Naive thymus-derived CD4-positive, alpha-beta T cell (primary cell): ENCODE measurements at regions of chr11 and their contacts with region 1.

Region 1: GRCh38 chr11:1852877-1853276 is at the start of gene LSP1:
- DNase-seq: peak in 8 of 9 donors; percentile 78 to 89 (median 84)
- ATAC-seq: peak; percentile 69
- H3K4me3 ChIP-seq: peak within 1 kb of the TSS; percentile 94
- H3K4me3 Mint-ChIP-seq: peak within 1 kb of the TSS; percentile 91 to 100 (median 97)
- H3K27ac ChIP-seq: peak within 1 kb of the TSS; percentile 80
- H3K27ac Mint-ChIP-seq: peak within 1 kb of the TSS; percentile 94 to 99 (median 97)
- H3K4me1 ChIP-seq: peaks cover 58 to 66% of the 10 kb centered on the region in 2 donors
- H3K4me1 Mint-ChIP-seq: peaks cover 31 to 72% (median 48%) of the 10 kb centered on the region in 7 donors
- H3K27me3 ChIP-seq: no peaks in the 10 kb centered on the region
- H3K27me3 Mint-ChIP-seq: peaks cover 0 to 4% (median 0%) of the 10 kb centered on the region in 5 donors
- total RNA-seq, gene LSP1: 248 to 578 (median 289) TPM

Region 2: DNA sequence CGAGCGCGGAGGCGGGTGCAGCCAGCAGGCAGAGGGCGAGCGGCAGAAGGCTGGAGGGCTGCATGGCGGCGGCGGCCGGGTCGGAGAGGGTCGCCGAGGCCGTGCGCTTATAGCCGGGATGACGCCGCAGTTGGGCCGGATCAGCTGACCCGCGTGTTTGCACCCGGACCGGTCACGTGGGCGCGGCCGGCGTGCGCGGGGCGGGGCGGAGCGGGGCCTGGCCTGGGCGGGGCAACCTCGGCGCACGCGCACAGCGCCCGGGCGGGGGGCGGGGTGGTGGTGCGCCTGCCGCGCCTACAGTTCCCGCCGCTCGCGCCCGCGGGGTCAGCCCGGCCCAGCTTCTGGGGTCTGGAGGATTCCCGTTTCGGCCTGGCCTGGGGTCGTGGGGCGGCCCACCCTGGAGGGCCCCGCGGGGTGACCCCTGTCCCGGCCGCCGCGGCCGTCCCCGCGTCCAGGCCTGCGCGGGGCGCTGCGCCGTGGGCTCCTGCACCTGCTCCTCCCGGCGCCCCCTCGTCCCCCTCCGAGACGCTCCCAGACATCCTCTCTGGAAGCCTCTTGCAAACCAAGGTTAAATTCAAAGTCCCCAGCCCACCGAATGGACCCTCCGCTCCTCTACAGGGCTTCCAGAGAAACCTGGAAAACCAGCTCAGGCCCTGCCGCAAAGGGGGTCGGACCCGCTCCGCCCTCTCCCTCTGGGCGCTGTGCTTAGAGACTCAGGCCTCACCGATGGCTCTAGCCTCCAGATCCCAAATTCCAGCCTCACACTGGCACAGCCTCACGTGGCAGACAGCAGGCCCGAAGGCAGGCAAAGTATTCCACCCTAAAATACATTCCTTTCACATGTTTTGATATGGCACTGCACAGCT is 88.8 kb before region 1 on chr11 and contains the start of gene CTSD:
- CTCF ChIA-PET with region 1: no interaction called
- POLR2A ChIA-PET with region 1: no interaction called
- intact Hi-C with region 1: loop called (anchors 5 kb)
- DNase-seq: peak; percentile 76 to 99 (median 83)
- ATAC-seq: peak; percentile 87
- H3K4me3 ChIP-seq: peak within 1 kb of the TSS; percentile 70
- H3K4me3 Mint-ChIP-seq: peak within 1 kb of the TSS; percentile 86 to 96 (median 91)
- H3K27ac ChIP-seq: peak within 1 kb of the TSS; percentile 82
- H3K27ac Mint-ChIP-seq: peak within 1 kb of the TSS; percentile 84 to 92 (median 87)
- H3K4me1 ChIP-seq: peaks cover 33 to 39% of the 10 kb centered on the region in 2 donors
- H3K4me1 Mint-ChIP-seq: peaks cover 14 to 41% (median 33%) of the 10 kb centered on the region in 7 donors
- H3K27me3 ChIP-seq: no peaks in the 10 kb centered on the region
- H3K27me3 Mint-ChIP-seq: no peaks in the 10 kb centered on the region
- total RNA-seq, gene CTSD: 103 to 378 (median 186) TPM

Region 3: GRCh38 chr11:1870721-1871466 is 18.0 kb after region 1 on chr11:
- CTCF ChIA-PET with region 1: interaction called, 5 read pairs
- POLR2A ChIA-PET with region 1: interaction called, 91 read pairs
- intact Hi-C with region 1: loop called in 1 of 2 experiments (anchors 1 kb)
- DNase-seq: peak in 7 of 9 donors; percentile 37 to 60 (median 50)
- ATAC-seq: peak; percentile 77
- H3K4me3 ChIP-seq: peak overlapping the region; percentile 51
- H3K4me3 Mint-ChIP-seq: peak overlapping the region; percentile 62 to 89 (median 82)
- H3K27ac ChIP-seq: peak overlapping the region; percentile 49
- H3K27ac Mint-ChIP-seq: peak overlapping the region; percentile 56 to 96 (median 93)
- H3K4me1 ChIP-seq: peaks cover 36 to 47% of the 10 kb centered on the region in 2 donors
- H3K4me1 Mint-ChIP-seq: peaks cover 30 to 64% (median 49%) of the 10 kb centered on the region in 7 donors
- H3K27me3 ChIP-seq: no peaks in the 10 kb centered on the region
- H3K27me3 Mint-ChIP-seq: no peaks in the 10 kb centered on the region

Region 4: GRCh38 chr11:1882519-1883238 is 29.8 kb after region 1 on chr11:
- CTCF ChIA-PET with region 1: interaction called, 12 read pairs
- POLR2A ChIA-PET with region 1: interaction called, 39 read pairs
- intact Hi-C with region 1: loop called in 1 of 2 experiments (anchors 1 kb)
- DNase-seq: peak; percentile 65 to 87 (median 80)
- ATAC-seq: peak; percentile 89
- H3K4me3 ChIP-seq: no peak overlapping the region
- H3K4me3 Mint-ChIP-seq: no peak overlapping the region
- H3K27ac ChIP-seq: peak overlapping the region; percentile 46
- H3K27ac Mint-ChIP-seq: peak overlapping the region in 4 of 9 donors; percentile 20 to 60 (median 48)
- H3K4me1 ChIP-seq: peaks cover 0 to 3% of the 10 kb centered on the region in 2 donors
- H3K4me1 Mint-ChIP-seq: peaks cover 6 to 27% (median 13%) of the 10 kb centered on the region in 7 donors
- H3K27me3 ChIP-seq: no peaks in the 10 kb centered on the region
- H3K27me3 Mint-ChIP-seq: no peaks in the 10 kb centered on the region

Region 5: GRCh38 chr11:1917671-1918516 is 65.0 kb after region 1 on chr11:
- CTCF ChIA-PET with region 1: no interaction called
- POLR2A ChIA-PET with region 1: interaction called, 9 read pairs
- intact Hi-C with region 1: loop called (anchors 5 kb)
- DNase-seq: peak in 1 of 9 donors; percentile 19
- ATAC-seq: peak; percentile 50
- H3K4me3 ChIP-seq: no peak overlapping the region
- H3K4me3 Mint-ChIP-seq: no peak overlapping the region
- H3K27ac ChIP-seq: no peak overlapping the region
- H3K27ac Mint-ChIP-seq: peak overlapping the region in 1 of 9 donors; percentile 5
- H3K4me1 ChIP-seq: no peaks in the 10 kb centered on the region
- H3K4me1 Mint-ChIP-seq: peaks cover 9 to 32% (median 15%) of the 10 kb centered on the region in 7 donors
- H3K27me3 ChIP-seq: no peaks in the 10 kb centered on the region
- H3K27me3 Mint-ChIP-seq: peaks cover 0 to 15% (median 11%) of the 10 kb centered on the region in 5 donors

Region 6: GRCh38 chr11:2892215-2893020 is 1039.5 kb after region 1 on chr11:
- CTCF ChIA-PET with region 1: no interaction called
- POLR2A ChIA-PET with region 1: no interaction called
- intact Hi-C with region 1: loop called in 1 of 2 experiments (anchors 10 kb)
- DNase-seq: peak; percentile 48 to 78 (median 67)
- ATAC-seq: peak; percentile 73
- H3K4me3 ChIP-seq: peak overlapping the region; percentile 53
- H3K4me3 Mint-ChIP-seq: peak overlapping the region; percentile 58 to 85 (median 76)
- H3K27ac ChIP-seq: peak overlapping the region; percentile 67
- H3K27ac Mint-ChIP-seq: peak overlapping the region; percentile 78 to 89 (median 84)
- H3K4me1 ChIP-seq: peaks cover 14 to 28% of the 10 kb centered on the region in 2 donors
- H3K4me1 Mint-ChIP-seq: peaks cover 15 to 37% (median 25%) of the 10 kb centered on the region in 7 donors
- H3K27me3 ChIP-seq: no peaks in the 10 kb centered on the region
- H3K27me3 Mint-ChIP-seq: peaks cover 0 to 6% (median 0%) of the 10 kb centered on the region in 5 donors